ENCODE measurements at regions of chr18 and their contacts with region 1.

Region 1: DNA sequence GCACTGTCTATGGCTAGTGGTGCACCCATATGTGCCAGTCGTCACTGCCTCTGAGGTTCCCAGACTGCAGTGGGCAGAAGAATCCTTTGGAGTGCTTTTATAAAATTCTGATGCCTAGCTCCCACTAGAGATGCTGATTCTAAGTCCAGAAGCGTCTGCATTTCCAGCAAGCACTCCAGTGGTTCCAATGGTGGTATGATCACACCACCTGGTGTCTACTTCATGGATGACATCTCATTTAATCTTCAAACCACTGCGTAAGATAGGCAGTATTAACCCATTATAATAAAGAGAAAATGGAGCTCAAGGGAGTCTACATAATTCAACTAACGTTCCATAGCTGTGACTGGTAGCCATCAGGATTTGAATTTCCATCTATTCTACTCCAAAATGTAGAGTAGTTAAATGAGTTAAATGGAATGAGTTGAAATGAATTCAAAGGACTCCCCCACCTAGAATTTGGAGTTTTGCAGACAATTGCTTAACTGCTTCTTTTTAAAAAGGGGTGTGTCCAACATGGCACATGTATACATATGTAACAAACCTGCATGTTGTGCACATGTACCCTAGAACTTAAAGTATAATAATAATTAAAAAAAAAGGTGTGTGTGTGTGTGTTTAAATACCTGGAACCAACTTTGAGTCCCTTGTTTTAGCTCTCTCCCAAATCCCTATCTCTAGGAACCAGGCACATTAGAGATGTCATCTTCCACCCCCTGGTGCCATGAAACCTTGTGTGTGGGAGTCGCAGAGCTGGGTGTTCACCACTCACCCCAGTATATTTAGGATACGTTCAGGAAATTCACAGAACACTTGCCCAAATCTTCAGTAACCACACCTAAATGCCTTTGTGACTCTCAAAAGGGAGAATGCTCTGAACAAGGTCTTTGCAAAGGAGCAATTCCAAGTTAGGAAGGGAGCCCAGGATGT is 14.1 kb downstream of the LAMA3 start:
- DNase-seq: peak; percentile 43 to 79
- ATAC-seq: peak; percentile 87 to 95
- H3K4me3 ChIP-seq: no peak overlapping the region
- H3K27ac ChIP-seq: peak overlapping the region; percentile 36 to 41; a peak in 5 of 6 replicates
- H3K4me1 ChIP-seq: peaks cover 33% of the 10 kb centered on the region
- CTCF ChIP-seq: peak; percentile 73
- EP300 ChIP-seq: no peak
- POLR2A ChIP-seq: no peak
- RAD21 ChIP-seq: peak; percentile 90 to 94

Region 2: GRCh38 chr18:23503038-23503962 is 200.0 kb before region 1 on chr18 and contains the start of gene RMC1:
- CTCF ChIA-PET with region 1: interaction called, 15 read pairs
- POLR2A ChIA-PET with region 1: no interaction called
- DNase-seq: peak; percentile 54 to 92
- ATAC-seq: peak; percentile 86 to 89
- H3K4me3 ChIP-seq: peak within 1 kb of the TSS; percentile 71
- H3K27ac ChIP-seq: peak within 1 kb of the TSS; percentile 83 to 90
- H3K4me1 ChIP-seq: peaks cover 10% of the 10 kb centered on the region
- CTCF ChIP-seq: no peak
- EP300 ChIP-seq: no peak
- POLR2A ChIP-seq: peak; percentile 73
- RAD21 ChIP-seq: peak in 1 of 2 experiments; percentile 39; a peak in 2 of 5 replicates
- polyA plus RNA-seq, gene RMC1: 17.5 and 28.5 TPM in 2 replicates

Region 3: GRCh38 chr18:23586249-23587196 is 116.8 kb before region 1 on chr18 and contains the start of gene NPC1:
- CTCF ChIA-PET with region 1: interaction called, 13 read pairs
- POLR2A ChIA-PET with region 1: no interaction called
- DNase-seq: peak; percentile 74 to 92
- ATAC-seq: peak; percentile 95 to 97
- H3K4me3 ChIP-seq: peak within 1 kb of the TSS; percentile 93
- H3K27ac ChIP-seq: peak within 1 kb of the TSS; percentile 98 to 99
- H3K4me1 ChIP-seq: peaks cover 54% of the 10 kb centered on the region
- CTCF ChIP-seq: peak; percentile 61
- EP300 ChIP-seq: peak in 1 of 2 experiments; percentile 61; a peak in 1 of 5 replicates
- POLR2A ChIP-seq: peak; percentile 57
- RAD21 ChIP-seq: peak; percentile 45 to 75
- polyA plus RNA-seq, gene NPC1: 42.5 and 45.0 TPM in 2 replicates

Region 4: GRCh38 chr18:23619388-23619881 is 83.9 kb before region 1 on chr18:
- CTCF ChIA-PET with region 1: interaction called, 89 read pairs
- POLR2A ChIA-PET with region 1: interaction called, 3 read pairs
- DNase-seq: no peak
- ATAC-seq: no peak
- H3K4me3 ChIP-seq: no peak overlapping the region
- H3K27ac ChIP-seq: peak overlapping the region; percentile 59 to 86; a peak in 5 of 6 replicates
- H3K4me1 ChIP-seq: peaks cover 40% of the 10 kb centered on the region
- CTCF ChIP-seq: no peak
- EP300 ChIP-seq: no peak
- POLR2A ChIP-seq: no peak
- RAD21 ChIP-seq: no peak

Region 5: DNA sequence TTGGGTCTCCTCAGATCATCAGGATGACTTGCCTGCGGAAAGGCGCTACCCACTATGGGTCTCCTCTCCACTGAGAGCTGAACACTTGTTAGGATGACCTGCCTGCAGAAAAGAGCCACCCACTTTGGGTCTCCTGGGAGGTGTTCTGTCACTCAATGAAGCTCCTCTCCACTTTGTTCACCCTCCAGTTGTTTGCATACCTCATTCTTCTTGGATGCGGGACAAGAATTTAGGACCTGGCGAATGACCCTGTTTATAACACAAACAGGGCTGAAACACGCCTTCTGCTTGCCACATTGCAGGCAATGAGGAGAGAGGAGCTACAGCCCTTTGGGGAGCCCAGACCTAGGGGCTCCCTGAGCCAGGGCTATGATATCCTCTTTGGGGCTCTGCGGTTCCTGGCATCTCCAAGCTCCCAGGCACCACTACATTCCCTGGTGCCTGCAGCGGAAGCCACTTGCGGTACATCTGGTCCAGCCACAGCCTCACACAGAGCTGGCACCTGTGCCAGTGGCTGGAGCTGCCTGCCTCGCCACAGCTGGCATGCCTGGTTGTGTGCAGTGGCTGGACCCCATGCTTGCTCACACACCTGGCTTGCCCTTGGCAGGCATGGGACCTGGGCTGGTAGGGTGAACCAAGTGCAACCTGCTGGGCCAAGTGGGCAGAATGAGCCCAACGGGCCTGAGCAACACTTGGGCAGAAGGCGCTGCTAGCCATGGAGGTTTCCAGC is 61.2 kb before region 1 on chr18:
- CTCF ChIA-PET with region 1: interaction called, 20 read pairs
- POLR2A ChIA-PET with region 1: no interaction called
- DNase-seq: no peak
- ATAC-seq: no peak
- H3K4me3 ChIP-seq: no peak overlapping the region
- H3K27ac ChIP-seq: no peak overlapping the region; a peak in 1 of 6 replicates
- H3K4me1 ChIP-seq: no peaks in the 10 kb centered on the region
- CTCF ChIP-seq: no peak
- EP300 ChIP-seq: no peak
- POLR2A ChIP-seq: no peak
- RAD21 ChIP-seq: no peak

Region 6: GRCh38 chr18:23719634-23720201 is 16.4 kb after region 1 on chr18:
- CTCF ChIA-PET with region 1: interaction called, 11 read pairs
- POLR2A ChIA-PET with region 1: interaction called, 3 read pairs
- DNase-seq: peak; percentile 86 to 95
- ATAC-seq: peak; percentile 96 to 98
- H3K4me3 ChIP-seq: no peak overlapping the region
- H3K27ac ChIP-seq: peak overlapping the region; percentile 73 to 93
- H3K4me1 ChIP-seq: peaks cover 90% of the 10 kb centered on the region
- CTCF ChIP-seq: no peak
- EP300 ChIP-seq: peak; percentile 33 to 40; a peak in 2 of 5 replicates
- POLR2A ChIP-seq: no peak
- RAD21 ChIP-seq: peak in 1 of 2 experiments; percentile 19; a peak in 1 of 5 replicates

Region 7: DNA sequence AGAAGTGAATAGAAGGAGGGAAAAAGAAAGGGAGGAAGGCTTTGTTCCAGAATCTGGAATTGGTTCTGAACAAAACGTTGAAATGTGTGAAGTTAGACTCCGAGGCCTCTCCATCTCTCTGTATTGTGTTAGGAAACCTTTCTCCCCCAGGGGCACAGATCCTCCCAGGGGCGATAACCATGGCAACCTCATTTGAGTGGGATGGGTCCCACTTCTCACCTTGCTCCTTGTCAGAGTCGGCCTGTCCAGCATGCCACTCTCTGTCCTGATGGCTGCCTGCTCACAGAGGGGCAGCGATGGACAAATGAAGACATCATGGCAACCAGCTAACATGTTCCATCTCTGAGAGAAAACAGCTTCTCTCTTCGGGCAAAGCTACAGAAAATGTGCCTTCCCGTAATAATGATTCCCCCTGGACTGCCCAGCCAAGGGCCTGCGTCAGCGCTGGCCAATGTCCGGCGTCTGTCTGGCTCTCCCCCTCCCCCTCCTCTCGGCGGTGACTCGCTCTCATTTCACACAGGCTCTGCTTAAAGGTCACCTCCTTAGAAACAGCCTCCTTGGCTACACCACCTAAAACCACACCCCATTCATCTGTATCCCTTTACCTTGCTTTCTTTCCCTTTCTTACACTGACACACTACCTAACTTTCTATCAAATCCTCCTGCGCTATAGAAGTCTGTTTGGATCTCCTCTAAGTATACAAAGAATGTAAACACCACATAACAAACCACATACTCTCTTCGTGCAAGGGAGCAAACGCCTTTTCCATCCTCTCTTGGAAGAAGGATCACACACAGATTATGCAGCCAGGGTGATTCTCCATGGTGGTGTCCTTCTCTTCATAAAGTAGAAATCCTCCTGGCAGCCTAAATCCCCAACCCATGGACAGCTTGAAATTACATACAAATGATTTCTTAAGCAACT is 279.1 kb after region 1 on chr18:
- CTCF ChIA-PET with region 1: no interaction called
- POLR2A ChIA-PET with region 1: no interaction called
- DNase-seq: peak; percentile 19 to 33
- ATAC-seq: peak; percentile 91 to 94
- H3K4me3 ChIP-seq: peak overlapping the region; percentile 20; the same call in 2 of the 3 replicates
- H3K27ac ChIP-seq: peak overlapping the region; percentile 64 to 77
- H3K4me1 ChIP-seq: peaks cover 12% of the 10 kb centered on the region
- CTCF ChIP-seq: no peak
- EP300 ChIP-seq: no peak
- POLR2A ChIP-seq: no peak
- RAD21 ChIP-seq: no peak